Activated B cell treated with CpG ODN at 0.5 μM for 24 hours (primary cell): ENCODE measurements at regions of chr1 and their contacts with region 1.

Region 1: DNA sequence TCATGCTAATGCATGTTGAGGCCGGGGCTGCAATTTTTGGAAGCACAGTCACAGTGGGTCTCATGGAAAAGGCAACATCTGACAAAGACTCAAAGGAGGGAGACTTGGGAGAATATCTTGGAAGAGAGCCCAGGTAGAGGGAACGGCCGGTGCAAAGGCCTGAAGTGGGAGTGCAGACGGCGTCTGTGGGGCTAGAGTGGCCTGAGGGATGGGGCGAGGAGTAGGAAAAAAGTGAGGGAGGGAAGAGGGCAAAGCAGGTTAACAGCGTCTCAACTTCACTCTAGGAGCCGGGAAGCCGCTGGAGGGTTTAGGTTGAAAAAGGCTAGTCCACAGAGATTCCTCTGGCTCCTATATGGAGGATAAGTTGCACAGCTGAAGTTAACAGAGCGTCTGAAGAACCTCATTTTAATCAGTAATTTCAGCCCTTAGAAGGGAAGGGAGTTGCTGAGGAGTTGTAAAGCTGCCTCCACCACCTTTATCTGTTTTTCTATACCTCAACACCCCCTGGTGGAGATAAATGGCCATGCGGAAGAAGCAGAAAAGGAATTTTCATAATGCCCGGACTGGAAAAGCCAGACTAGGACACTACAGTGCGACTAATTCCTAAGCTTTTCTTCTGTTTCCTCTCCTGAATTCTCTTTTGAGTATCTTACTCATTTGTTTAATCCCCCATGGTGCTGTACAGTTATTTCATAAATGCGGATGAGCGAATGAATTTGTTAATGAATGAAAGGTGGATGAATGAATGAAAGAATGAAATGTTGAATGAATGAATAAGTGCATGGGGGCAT is 78.7 kb upstream of the ZNF281 start:
- DNase-seq: no peak
- ATAC-seq: peak; percentile 82
- H3K4me3 Mint-ChIP-seq: no peak overlapping the region
- H3K27ac Mint-ChIP-seq: no peak overlapping the region
- H3K4me1 Mint-ChIP-seq: peaks cover 8% of the 10 kb centered on the region
- H3K27me3 Mint-ChIP-seq: peaks cover 7% of the 10 kb centered on the region
- CTCF ChIP-seq: peak; percentile 67

Region 2: DNA sequence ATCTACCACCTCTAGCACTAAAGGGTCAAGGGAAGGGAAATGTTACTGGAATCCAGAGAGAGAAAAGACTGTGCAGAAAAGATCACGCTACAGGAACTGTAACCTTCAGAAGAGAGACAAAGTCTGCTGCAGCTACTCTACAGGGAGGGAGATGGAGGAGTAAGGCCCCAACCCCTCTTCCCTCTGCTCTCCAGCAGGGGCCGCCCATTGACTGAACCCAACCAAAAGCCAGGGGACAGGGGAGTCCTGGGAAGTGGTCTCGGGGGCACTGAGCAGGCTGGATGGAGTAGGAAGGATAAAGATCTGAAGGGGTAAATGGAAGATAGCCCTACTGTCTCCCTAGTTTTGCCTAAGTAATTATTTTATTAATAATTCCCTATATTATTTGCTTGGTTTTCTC is 533.9 kb before region 1 on chr1:
- CTCF ChIA-PET with region 1: no interaction called
- POLR2A ChIA-PET with region 1: no interaction called
- intact Hi-C with region 1: loop called (anchors 5 kb)
- DNase-seq: no peak
- ATAC-seq: no peak
- H3K4me3 Mint-ChIP-seq: no peak overlapping the region
- H3K27ac Mint-ChIP-seq: no peak overlapping the region
- H3K4me1 Mint-ChIP-seq: no peaks in the 10 kb centered on the region
- H3K27me3 Mint-ChIP-seq: peaks cover 11% of the 10 kb centered on the region
- CTCF ChIP-seq: no peak

Region 3: DNA sequence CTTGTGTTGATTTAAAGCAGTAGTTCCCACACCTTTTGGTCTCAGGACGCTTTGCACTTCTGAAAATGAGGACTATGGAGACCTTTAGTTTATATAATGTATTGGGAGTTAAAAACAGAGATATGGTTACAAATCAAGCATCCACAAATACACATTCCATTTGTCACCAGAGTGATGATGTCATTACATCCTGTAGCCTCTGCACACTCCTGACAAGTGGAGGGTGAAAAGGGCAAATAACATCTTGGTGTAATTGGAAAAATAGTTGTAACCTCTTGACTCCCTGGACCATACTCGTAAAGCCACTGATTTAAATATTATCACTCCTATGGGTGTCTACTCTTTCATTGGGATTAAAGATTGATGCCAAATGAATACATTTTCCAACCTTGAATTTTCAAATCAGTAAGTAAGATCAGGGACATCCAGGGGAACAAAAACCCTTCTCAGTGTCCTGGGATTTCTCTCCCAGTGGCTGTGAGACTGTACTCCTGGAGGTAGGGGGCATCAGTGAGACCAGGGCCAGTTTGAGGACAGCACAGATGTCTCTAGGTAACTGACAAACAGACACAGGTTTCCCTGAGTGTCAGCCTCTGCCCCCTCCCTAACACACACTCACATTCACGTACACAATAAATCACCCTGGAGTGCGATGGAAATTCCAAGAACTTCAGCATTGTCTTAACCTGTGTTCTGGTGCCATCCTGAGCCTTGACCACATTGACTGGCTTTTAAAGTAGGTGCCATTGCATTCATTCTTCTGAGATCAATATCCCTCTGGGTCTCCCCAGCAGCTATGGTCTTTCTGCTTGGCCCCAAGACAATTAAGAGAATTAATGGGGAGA is 398.1 kb before region 1 on chr1:
- CTCF ChIA-PET with region 1: interaction called, 3 read pairs
- POLR2A ChIA-PET with region 1: no interaction called
- intact Hi-C with region 1: loop called (anchors 1 kb)
- DNase-seq: no peak
- ATAC-seq: no peak
- H3K4me3 Mint-ChIP-seq: no peak overlapping the region
- H3K27ac Mint-ChIP-seq: no peak overlapping the region
- H3K4me1 Mint-ChIP-seq: no peaks in the 10 kb centered on the region
- H3K27me3 Mint-ChIP-seq: peaks cover 9% of the 10 kb centered on the region
- CTCF ChIP-seq: no peak

Region 4: GRCh38 chr1:200139661-200140250 is 348.8 kb before region 1 on chr1:
- CTCF ChIA-PET with region 1: interaction called, 21 read pairs
- POLR2A ChIA-PET with region 1: no interaction called
- intact Hi-C with region 1: loop called (anchors 1 kb)
- DNase-seq: no peak
- ATAC-seq: peak; percentile 78
- H3K4me3 Mint-ChIP-seq: no peak overlapping the region
- H3K27ac Mint-ChIP-seq: no peak overlapping the region
- H3K4me1 Mint-ChIP-seq: no peaks in the 10 kb centered on the region
- H3K27me3 Mint-ChIP-seq: no peaks in the 10 kb centered on the region
- CTCF ChIP-seq: no peak

Region 5: DNA sequence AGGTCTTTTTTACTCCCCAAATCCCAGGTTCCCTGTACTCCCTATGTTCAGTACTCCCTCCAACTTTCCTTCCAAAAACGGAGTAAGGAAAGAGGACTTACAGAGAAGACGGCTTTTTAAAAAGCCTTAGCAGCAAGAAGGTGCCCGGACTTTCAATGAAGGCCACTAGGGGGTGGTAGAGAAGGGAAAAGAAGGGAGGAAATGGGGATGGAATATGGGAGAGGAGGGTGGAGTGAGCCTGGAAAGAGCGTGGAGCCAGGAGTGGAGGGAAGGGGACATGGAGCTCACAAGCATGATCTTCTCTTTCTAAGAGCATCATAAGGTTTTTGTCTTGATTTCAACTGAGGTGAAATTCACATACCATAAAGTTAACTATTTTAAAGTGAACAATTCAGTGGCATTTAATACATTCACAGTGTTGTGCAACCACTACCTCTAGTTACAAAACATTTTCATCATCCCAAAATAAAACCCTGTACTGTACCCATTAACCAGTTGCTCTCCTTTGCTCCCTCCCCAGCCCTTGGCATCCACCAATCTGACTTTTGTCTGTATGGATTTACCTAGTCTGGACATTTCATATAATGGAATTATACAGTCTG is 208.7 kb before region 1 on chr1:
- CTCF ChIA-PET with region 1: interaction called, 4 read pairs
- POLR2A ChIA-PET with region 1: no interaction called
- intact Hi-C with region 1: loop called (anchors 1 kb)
- DNase-seq: no peak
- ATAC-seq: no peak
- H3K4me3 Mint-ChIP-seq: no peak overlapping the region
- H3K27ac Mint-ChIP-seq: no peak overlapping the region
- H3K4me1 Mint-ChIP-seq: peaks cover 12% of the 10 kb centered on the region
- H3K27me3 Mint-ChIP-seq: peaks cover 4% of the 10 kb centered on the region
- CTCF ChIP-seq: no peak

Region 6: GRCh38 chr1:200448034-200448762 is 40.4 kb before region 1 on chr1:
- CTCF ChIA-PET with region 1: no interaction called
- POLR2A ChIA-PET with region 1: no interaction called
- intact Hi-C with region 1: loop called (anchors 1 kb)
- DNase-seq: no peak
- ATAC-seq: peak; percentile 77
- H3K4me3 Mint-ChIP-seq: peak overlapping the region; percentile 49
- H3K27ac Mint-ChIP-seq: peak overlapping the region; percentile 87
- H3K4me1 Mint-ChIP-seq: peaks cover 24% of the 10 kb centered on the region
- H3K27me3 Mint-ChIP-seq: no peaks in the 10 kb centered on the region
- CTCF ChIP-seq: no peak

Region 7: DNA sequence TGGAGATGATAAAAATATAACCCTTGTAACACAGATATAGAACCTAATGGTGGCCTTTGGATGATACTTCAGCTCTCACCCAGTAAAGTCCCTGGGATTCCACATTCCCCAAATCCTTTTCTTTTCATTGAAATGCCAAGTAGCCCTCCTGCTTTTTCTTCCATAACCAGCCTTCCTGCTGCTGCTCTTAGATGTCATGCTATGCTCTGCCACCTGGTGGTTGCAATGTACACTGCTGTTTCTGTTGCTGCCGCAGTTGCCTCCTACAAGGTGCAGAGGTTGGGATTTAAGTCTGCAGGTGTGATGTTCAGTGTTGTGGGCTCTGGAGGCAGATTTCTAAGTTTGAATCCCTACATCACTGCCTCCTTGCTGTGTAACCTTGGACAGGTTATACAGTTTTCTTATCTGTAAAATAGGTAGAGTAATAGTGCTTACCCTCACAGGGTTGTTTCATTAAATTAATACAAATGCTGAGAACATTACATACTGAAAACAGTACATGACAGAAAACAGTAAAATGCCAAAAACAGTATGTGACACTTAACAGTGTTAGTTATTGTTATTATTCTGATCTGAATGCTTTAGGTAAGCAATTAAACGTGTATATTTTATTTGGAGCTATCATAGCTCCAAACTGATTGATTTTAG is 314.4 kb after region 1 on chr1:
- CTCF ChIA-PET with region 1: no interaction called
- POLR2A ChIA-PET with region 1: no interaction called
- intact Hi-C with region 1: no loop called
- DNase-seq: peak; percentile 26
- ATAC-seq: peak; percentile 81
- H3K4me3 Mint-ChIP-seq: no peak overlapping the region
- H3K27ac Mint-ChIP-seq: no peak overlapping the region
- H3K4me1 Mint-ChIP-seq: no peaks in the 10 kb centered on the region
- H3K27me3 Mint-ChIP-seq: peaks cover 10% of the 10 kb centered on the region
- CTCF ChIP-seq: peak; percentile 61